CD14-positive monocyte (primary cell): ENCODE measurements at regions of chr10 and their contacts with region 1.

Region 1: GRCh38 chr10:88851706-88852105 is at the start of gene ANKRD22:
- DNase-seq: peak; percentile 76 to 94 (median 92)
- H3K4me3 ChIP-seq: peak within 1 kb of the TSS; percentile 13 to 67 (median 45)
- H3K4me3 Mint-ChIP-seq: peak within 1 kb of the TSS; percentile 73 to 78
- H3K27ac ChIP-seq: peak within 1 kb of the TSS; percentile 72 to 79
- H3K27ac Mint-ChIP-seq: peak within 1 kb of the TSS; percentile 88 to 96 (median 95)
- H3K4me1 ChIP-seq: peaks cover 77 to 79% of the 10 kb centered on the region in 2 donors
- H3K4me1 Mint-ChIP-seq: peaks cover 91% of the 10 kb centered on the region
- H3K27me3 ChIP-seq: no peaks in the 10 kb centered on the region
- H3K27me3 Mint-ChIP-seq: peaks cover 0 to 4% (median 1%) of the 10 kb centered on the region in 3 donors
- CTCF ChIP-seq: no peak
- polyA plus RNA-seq, gene ANKRD22: 2.7 to 3.5 (median 3.2) TPM

Region 2: DNA sequence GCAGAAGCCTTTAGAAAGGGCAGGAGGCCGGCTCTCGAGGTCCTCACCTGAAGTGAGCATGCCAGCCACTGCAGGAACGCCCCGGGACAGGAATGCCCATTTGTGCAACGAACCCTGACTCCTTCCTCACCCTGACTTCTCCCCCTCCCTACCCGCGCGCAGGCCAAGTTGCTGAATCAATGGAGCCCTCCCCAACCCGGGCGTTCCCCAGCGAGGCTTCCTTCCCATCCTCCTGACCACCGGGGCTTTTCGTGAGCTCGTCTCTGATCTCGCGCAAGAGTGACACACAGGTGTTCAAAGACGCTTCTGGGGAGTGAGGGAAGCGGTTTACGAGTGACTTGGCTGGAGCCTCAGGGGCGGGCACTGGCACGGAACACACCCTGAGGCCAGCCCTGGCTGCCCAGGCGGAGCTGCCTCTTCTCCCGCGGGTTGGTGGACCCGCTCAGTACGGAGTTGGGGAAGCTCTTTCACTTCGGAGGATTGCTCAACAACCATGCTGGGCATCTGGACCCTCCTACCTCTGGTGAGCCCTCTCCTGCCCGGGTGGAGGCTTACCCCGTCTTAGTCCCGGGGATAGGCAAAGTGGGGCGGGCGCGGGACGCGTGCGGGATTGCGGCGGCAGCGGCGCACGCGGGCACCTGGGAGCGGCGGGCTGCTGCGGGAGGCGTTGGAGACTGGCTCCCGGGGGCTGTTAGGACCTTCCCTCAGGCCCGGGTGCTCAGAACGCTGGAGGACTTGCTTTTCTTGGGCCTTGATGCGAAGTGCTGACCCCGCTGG is 138.9 kb after region 1 on chr10 and contains the start of gene FAS:
- intact Hi-C with region 1: loop called in 1 of 2 experiments (anchors 5 kb)
- DNase-seq: peak; percentile 76 to 98 (median 83)
- H3K4me3 ChIP-seq: peak within 1 kb of the TSS; percentile 76 to 86 (median 82)
- H3K4me3 Mint-ChIP-seq: peak within 1 kb of the TSS; percentile 99
- H3K27ac ChIP-seq: peak within 1 kb of the TSS; percentile 91 to 95
- H3K27ac Mint-ChIP-seq: peak within 1 kb of the TSS; percentile 94 to 99 (median 99)
- H3K4me1 ChIP-seq: peaks cover 53 to 68% of the 10 kb centered on the region in 2 donors
- H3K4me1 Mint-ChIP-seq: peaks cover 65% of the 10 kb centered on the region
- H3K27me3 ChIP-seq: no peaks in the 10 kb centered on the region
- H3K27me3 Mint-ChIP-seq: peaks cover 0 to 4% (median 0%) of the 10 kb centered on the region in 3 donors
- CTCF ChIP-seq: peak; percentile 18
- polyA plus RNA-seq, gene FAS: 27.3 to 28.9 (median 27.9) TPM

Region 3: DNA sequence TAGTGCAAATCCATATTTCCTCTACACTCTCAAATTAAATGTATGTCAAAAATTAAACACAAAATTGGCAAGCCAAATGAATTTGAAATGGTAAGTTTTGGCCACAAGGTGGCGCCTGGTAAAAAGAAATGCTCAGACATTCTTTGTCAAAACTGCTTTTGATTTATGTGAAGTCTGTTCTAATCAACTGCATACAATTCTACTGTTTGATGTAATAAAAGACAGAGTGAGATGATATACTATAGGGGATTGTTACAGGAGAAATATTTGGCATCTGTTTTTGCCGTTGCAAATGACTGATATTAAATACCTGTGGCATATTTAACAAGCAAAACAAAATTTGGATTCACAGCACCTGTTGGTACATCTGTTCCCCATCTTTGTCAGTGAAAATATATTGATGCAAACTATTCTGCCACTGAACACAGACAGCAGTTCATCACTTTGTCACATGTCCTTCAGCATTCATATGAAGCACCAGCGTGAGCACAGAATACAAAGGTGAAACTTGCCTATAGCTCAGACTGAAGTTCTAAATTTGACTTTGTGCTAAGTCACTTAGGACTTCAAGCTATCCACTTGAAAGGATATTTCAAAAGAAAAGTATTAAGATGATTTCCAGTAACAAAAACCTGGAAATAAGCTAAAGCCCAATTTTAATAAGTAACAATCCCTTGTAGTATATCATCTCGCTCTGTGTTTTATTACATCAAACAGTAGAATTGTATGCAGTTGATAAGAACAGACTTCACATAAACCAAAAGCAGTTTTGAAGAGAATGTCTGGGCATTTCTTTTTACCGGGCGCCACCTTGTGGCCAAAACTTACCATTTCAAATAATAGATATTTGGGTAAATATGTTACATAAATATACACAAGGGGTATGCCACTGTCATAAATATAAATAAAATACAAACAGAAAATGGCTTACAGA is 365.6 kb after region 1 on chr10:
- intact Hi-C with region 1: loop called in 1 of 2 experiments (anchors 10 kb)
- DNase-seq: peak; percentile 45 to 67 (median 53)
- H3K4me3 ChIP-seq: no peak overlapping the region
- H3K4me3 Mint-ChIP-seq: no peak overlapping the region
- H3K27ac ChIP-seq: peak overlapping the region in 1 of 2 donors; percentile 31
- H3K27ac Mint-ChIP-seq: peak overlapping the region in 3 of 7 donors; percentile 20 to 68 (median 61)
- H3K4me1 ChIP-seq: peaks cover 5 to 10% of the 10 kb centered on the region in 2 donors
- H3K4me1 Mint-ChIP-seq: peaks cover 9% of the 10 kb centered on the region
- H3K27me3 ChIP-seq: no peaks in the 10 kb centered on the region
- H3K27me3 Mint-ChIP-seq: peaks cover 0 to 2% (median 0%) of the 10 kb centered on the region in 3 donors
- CTCF ChIP-seq: peak; percentile 78